Transverse colon (tissue), 4 donors: ENCODE measurements at regions of chr12 and their contacts with region 1.

Region 1: DNA sequence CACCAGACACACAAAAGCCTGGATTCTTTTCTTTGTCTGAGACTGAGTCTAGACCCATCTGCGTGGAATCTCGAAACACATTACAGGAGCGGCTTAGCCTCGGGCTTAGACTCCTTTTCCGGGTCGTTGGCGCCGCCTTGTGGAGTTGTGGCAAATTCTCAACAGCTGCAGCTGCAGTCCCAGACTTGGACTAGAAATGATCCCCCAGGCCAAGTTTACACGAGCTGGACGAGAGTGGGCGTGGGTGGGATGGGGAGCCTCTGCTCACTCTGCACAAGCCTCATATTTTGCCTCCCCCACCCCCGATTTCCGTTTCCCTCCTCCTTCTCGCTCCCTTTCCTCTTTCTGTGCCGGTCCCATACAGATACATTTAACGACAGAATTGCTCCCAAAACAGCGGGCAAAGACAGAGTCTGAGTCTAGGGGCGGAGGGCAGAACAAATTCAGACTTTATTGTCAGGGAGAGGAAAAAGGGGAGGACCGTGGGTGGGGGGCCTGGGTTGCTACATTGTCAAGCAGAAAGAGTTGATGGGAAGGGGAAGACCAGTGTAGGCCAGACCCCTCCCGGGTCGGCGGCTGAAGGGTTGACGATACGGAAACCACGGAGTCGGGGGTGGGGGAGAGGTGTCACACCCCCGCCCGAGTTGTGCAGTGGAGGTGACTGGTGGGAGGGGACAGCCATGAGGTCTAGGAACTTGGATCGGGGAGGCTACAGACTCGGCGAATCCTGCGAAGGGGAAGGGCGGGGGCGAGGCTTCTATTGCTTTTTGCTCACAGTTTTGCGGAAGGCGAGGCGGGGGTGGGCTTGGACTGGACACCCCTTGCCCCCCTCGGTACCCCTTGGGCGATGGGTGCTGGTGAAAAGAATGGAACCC is 4.7 kb upstream of the GPR84 start:
- DNase-seq: peak; percentile 93
- H3K4me3 ChIP-seq: peak overlapping the region in 2 of 4 donors; percentile 26 to 49
- H3K27ac ChIP-seq: peak overlapping the region; percentile 38 to 63 (median 53)
- H3K4me1 ChIP-seq: peaks cover 0 to 45% (median 20%) of the 10 kb centered on the region in 4 donors
- H3K27me3 ChIP-seq: no peaks in the 10 kb centered on the region
- CTCF ChIP-seq: peak; percentile 74 to 88 (median 84)
- EP300 ChIP-seq: no peak
- POLR2A ChIP-seq: no peak

Region 2: GRCh38 chr12:54191550-54192022 is 177.4 kb before region 1 on chr12:
- in situ Hi-C with region 1: no loop called
- intact Hi-C with region 1: no loop called
- DNase-seq: peak; percentile 83
- H3K4me3 ChIP-seq: no peak overlapping the region
- H3K27ac ChIP-seq: no peak overlapping the region
- H3K4me1 ChIP-seq: peaks cover 0 to 15% (median 9%) of the 10 kb centered on the region in 4 donors
- H3K27me3 ChIP-seq: peaks cover 61% of the 10 kb centered on the region
- CTCF ChIP-seq: peak; percentile 76 to 83 (median 79)
- EP300 ChIP-seq: no peak
- POLR2A ChIP-seq: no peak

Region 3: DNA sequence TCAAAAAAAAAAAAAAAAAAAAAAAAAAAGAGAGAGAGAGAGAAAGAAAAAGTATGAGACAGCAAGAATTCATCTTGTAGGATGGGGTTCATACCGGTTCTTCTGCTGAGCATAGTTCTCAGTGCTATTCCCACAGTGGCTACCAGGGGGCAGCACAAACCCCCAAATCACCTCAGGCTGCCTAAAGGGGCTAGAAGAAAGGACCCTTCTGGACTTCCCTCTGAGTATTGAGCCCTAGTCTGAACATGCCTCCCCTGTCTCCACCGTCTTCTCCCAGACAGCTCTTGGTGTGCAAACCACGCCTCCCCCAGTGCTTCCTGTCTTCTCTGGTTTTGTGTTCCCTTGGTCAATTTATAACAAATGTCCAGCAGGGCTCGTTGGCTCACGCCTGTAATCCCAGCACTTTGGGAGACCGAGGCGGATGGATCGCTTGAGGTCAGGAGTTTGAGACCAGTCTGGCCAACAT is 148.8 kb before region 1 on chr12:
- in situ Hi-C with region 1: loop called in 2 of 4 experiments (anchors 10 kb)
- intact Hi-C with region 1: loop called (anchors 10 kb)
- DNase-seq: peak; percentile 70
- H3K4me3 ChIP-seq: no peak overlapping the region
- H3K27ac ChIP-seq: no peak overlapping the region
- H3K4me1 ChIP-seq: peaks cover 9 to 32% (median 20%) of the 10 kb centered on the region in 4 donors
- H3K27me3 ChIP-seq: peaks cover 50% of the 10 kb centered on the region
- CTCF ChIP-seq: peak; percentile 68 to 87 (median 73)
- EP300 ChIP-seq: no peak
- POLR2A ChIP-seq: no peak

Region 4: GRCh38 chr12:54259194-54260011 is 109.5 kb before region 1 on chr12:
- in situ Hi-C with region 1: loop called in 1 of 4 experiments (anchors 10 kb)
- intact Hi-C with region 1: no loop called
- DNase-seq: peak; percentile 64
- H3K4me3 ChIP-seq: peak overlapping the region; percentile 7 to 42 (median 26)
- H3K27ac ChIP-seq: peak overlapping the region; percentile 65 to 81 (median 76)
- H3K4me1 ChIP-seq: peaks cover 5 to 34% (median 20%) of the 10 kb centered on the region in 4 donors
- H3K27me3 ChIP-seq: no peaks in the 10 kb centered on the region
- CTCF ChIP-seq: no peak
- EP300 ChIP-seq: no peak
- POLR2A ChIP-seq: no peak

Region 5: GRCh38 chr12:54294152-54294952 is 74.6 kb before region 1 on chr12:
- in situ Hi-C with region 1: loop called in 1 of 4 experiments (anchors 10 kb)
- intact Hi-C with region 1: loop called (anchors 5 kb)
- DNase-seq: peak; percentile 75
- H3K4me3 ChIP-seq: no peak overlapping the region
- H3K27ac ChIP-seq: no peak overlapping the region
- H3K4me1 ChIP-seq: peaks cover 0 to 7% (median 0%) of the 10 kb centered on the region in 4 donors
- H3K27me3 ChIP-seq: peaks cover 10% of the 10 kb centered on the region
- CTCF ChIP-seq: peak; percentile 67 to 87 (median 80)
- EP300 ChIP-seq: no peak
- POLR2A ChIP-seq: no peak